A549 (cell line): ENCODE measurements at regions of chr10 and their contacts with region 1.

Region 1: DNA sequence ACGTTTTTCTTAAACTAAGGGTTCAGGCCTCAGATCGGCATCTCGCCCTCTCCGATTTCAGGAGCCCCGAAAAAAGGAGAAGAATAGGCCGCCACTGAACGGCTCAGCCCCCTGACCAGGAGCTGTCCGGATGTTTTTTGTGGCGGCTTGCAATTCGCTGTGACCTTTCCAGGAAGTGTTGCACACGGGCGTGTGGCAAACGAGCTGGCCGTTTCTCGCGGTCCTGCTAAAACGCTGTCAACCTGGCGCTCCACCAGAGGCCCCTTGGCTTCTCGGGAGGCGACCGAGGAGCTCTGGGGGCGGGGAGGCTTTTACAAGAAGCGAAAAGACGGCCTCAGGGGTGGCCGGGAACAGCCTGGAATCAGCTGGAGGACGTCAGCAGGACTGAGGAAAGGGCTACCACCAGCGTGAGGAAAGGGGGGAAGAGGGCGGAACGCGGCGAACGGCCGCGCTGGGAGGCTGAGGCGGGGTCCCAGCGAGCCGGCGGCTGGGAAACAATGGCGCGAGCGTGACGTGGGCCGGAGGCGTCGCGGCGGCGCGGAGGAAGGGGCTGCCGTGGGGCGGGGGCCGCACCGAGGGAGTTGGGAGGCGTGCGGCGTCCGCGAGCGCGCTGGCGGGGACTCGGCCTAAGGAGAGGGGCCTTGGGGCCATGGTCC is 493 bp downstream of the NT5C2 start:
- DNase-seq: peak; percentile 37 to 80
- ATAC-seq: peak; percentile 66 to 70
- H3K4me3 ChIP-seq: peak overlapping the region; percentile 79
- H3K27ac ChIP-seq: peak overlapping the region; percentile 91 to 97
- H3K4me1 ChIP-seq: peaks cover 60% of the 10 kb centered on the region
- CTCF ChIP-seq: no peak
- EP300 ChIP-seq: peak in 1 of 2 experiments; percentile 15; a peak in 1 of 5 replicates
- POLR2A ChIP-seq: no peak
- RAD21 ChIP-seq: 0 out of 5 replicates have a peak, but pooled peaks of 1 of the 2 experiments have one; percentile 16

Region 2: DNA sequence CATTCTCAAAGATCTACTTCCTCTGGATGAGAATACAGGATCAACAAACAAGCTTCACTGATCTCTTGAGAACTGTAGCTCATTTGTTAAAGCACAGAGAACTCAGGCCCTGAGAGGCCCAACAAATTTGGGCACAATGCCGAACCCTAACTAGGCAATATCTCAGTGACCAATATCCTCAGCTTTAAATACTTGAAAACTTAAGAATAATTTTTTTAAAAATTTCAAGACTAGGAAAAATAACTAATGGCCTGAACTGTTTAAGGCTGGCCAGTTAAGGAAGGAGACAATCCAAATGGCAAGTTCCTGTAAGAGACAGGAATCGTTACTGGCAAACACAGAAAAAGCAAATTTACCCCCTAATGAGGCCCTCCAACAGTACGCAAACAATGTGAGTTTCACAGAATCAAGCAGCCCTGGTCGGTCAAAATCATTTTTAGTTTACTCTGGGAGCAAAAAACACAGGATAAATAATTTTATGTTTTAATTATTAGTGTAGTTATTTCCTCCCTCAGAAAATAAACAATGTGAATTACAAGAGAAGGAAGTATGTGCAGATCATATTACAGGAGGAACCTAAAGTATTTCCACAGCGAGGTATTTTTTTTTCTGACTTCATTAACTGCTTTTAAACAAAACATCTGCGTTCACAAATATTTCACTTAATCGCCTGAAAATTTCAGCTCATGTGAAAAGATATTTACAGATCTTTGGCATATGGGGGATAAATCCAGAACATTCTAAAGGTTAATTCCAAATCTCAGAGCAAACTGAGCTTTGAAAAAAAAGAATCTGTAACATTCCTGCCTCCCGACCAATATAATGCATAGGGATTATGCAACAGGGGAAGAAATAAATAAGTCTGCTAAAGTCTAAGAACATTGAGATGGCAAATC is 39.0 kb before region 1 on chr10:
- CTCF ChIA-PET with region 1: interaction called, 3 read pairs
- POLR2A ChIA-PET with region 1: interaction called, 12 read pairs
- DNase-seq: peak in 1 of 2 experiments; percentile 38
- ATAC-seq: peak; percentile 33 to 59; a peak in 3 of 6 replicates
- H3K4me3 ChIP-seq: peak overlapping the region; percentile 20; the same call in 2 of the 3 replicates
- H3K27ac ChIP-seq: peak overlapping the region; percentile 79 to 84
- H3K4me1 ChIP-seq: peaks cover 67% of the 10 kb centered on the region
- CTCF ChIP-seq: no peak
- EP300 ChIP-seq: no peak
- POLR2A ChIP-seq: no peak
- RAD21 ChIP-seq: no peak

Region 3: GRCh38 chr10:103181244-103181643 is 11.3 kb before region 1 on chr10:
- CTCF ChIA-PET with region 1: interaction called, 4 read pairs
- POLR2A ChIA-PET with region 1: interaction called, 15 read pairs
- DNase-seq: no peak
- ATAC-seq: peak in 1 of 2 experiments; percentile 16; a peak in 2 of 6 replicates
- H3K4me3 ChIP-seq: no peak overlapping the region
- H3K27ac ChIP-seq: no peak overlapping the region
- H3K4me1 ChIP-seq: peaks cover 52% of the 10 kb centered on the region
- CTCF ChIP-seq: no peak
- EP300 ChIP-seq: no peak
- POLR2A ChIP-seq: no peak
- RAD21 ChIP-seq: no peak

Region 4: DNA sequence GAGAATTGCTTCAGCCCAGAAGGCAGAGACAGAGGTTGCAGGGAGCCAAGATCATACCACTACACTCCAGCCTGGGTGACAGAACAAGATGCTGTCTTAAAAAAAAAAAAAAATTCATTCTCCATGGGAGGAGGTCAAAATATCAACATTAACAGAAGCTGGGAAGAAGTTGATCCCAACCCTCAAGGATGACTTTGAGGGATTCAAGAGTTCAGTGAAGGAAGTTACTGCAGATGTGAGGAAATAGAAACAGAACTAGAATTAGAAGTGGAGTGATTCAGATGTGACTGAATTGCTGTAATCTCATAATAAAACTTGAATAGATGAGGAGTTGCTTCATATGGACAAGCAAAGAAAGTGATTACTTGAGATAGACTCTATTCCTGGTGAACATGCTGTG is 33.4 kb after region 1 on chr10:
- CTCF ChIA-PET with region 1: interaction called, 16 read pairs
- POLR2A ChIA-PET with region 1: interaction called, 57 read pairs
- DNase-seq: no peak
- ATAC-seq: no peak
- H3K4me3 ChIP-seq: no peak overlapping the region
- H3K27ac ChIP-seq: peak overlapping the region; percentile 13 to 96; a peak in 3 of 6 replicates
- H3K4me1 ChIP-seq: peaks cover 38% of the 10 kb centered on the region
- CTCF ChIP-seq: no peak
- EP300 ChIP-seq: no peak
- POLR2A ChIP-seq: no peak
- RAD21 ChIP-seq: no peak

Region 5: DNA sequence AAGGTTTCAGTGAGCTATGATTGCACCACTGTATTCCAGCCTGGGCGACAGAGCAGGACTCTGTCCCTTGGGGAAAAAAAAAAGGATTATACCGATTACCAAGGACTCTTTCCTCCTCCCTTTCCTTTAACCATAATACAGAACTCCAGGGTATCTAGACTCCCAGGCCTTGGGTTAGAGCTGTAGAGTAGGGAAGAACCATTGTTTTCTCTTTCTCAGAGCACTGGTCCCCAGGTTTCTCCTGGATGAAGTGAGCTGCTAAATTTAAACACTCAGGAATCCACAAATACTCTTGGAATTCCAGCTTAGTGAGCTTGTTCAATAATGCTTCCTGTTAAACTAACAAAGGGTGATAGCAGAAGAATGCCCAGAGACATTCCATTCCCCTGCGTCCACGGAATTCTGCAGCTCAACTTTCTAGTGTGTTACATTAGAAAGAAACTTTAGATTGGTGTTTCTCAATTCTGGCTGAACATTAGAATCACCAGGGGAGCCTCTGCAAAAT is 38.5 kb after region 1 on chr10:
- CTCF ChIA-PET with region 1: interaction called, 16 read pairs
- POLR2A ChIA-PET with region 1: interaction called, 57 read pairs
- DNase-seq: peak; percentile 57 to 96
- ATAC-seq: peak; percentile 92
- H3K4me3 ChIP-seq: no peak overlapping the region
- H3K27ac ChIP-seq: peak overlapping the region; percentile 93 to 96
- H3K4me1 ChIP-seq: peaks cover 74% of the 10 kb centered on the region
- CTCF ChIP-seq: no peak
- EP300 ChIP-seq: peak; percentile 83 to 94; a peak in 4 of 5 replicates
- POLR2A ChIP-seq: no peak
- RAD21 ChIP-seq: peak; percentile 32 to 50; a peak in 4 of 5 replicates

Region 6: GRCh38 chr10:103238506-103239252 is 46.1 kb after region 1 on chr10:
- CTCF ChIA-PET with region 1: interaction called, 40 read pairs
- POLR2A ChIA-PET with region 1: interaction called, 57 read pairs
- DNase-seq: peak; percentile 59 to 98
- ATAC-seq: peak; percentile 62 to 83
- H3K4me3 ChIP-seq: no peak overlapping the region
- H3K27ac ChIP-seq: peak overlapping the region; percentile 96 to 100
- H3K4me1 ChIP-seq: peaks cover 61% of the 10 kb centered on the region
- CTCF ChIP-seq: peak; percentile 63
- EP300 ChIP-seq: peak in 1 of 2 experiments; percentile 58; a peak in 1 of 5 replicates
- POLR2A ChIP-seq: no peak
- RAD21 ChIP-seq: peak; percentile 76 to 84